Motor neuron (in vitro differentiated cells): ENCODE measurements at regions of chr6 and their contacts with region 1.

Region 1: DNA sequence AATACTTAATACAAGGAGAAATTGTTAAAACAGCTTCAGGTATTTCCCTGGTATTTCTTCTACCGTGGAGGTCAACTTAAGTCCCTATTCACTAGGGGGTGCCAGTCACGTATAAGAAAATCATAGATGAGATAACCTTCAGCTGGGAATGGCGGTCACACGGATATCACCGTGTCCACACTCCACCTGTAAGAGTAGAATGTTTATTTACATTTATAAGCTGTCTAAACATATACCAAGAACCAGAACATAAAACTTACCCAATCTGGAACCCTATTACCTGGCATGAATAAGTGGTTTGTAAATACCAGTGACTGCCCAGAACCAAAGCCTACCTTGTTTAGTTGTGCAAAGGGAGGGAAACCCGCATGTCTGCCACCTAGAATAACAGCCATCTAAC is 1.9 kb upstream of the ELOVL4 start:
- ATAC-seq: peak in 2 of 8 experiments; percentile 5 to 8
- H3K4me3 ChIP-seq: no peak overlapping the region
- H3K27ac ChIP-seq: no peak overlapping the region
- H3K4me1 ChIP-seq: peaks cover 2 to 18% of the 10 kb centered on the region in 2 donors

Region 2: DNA sequence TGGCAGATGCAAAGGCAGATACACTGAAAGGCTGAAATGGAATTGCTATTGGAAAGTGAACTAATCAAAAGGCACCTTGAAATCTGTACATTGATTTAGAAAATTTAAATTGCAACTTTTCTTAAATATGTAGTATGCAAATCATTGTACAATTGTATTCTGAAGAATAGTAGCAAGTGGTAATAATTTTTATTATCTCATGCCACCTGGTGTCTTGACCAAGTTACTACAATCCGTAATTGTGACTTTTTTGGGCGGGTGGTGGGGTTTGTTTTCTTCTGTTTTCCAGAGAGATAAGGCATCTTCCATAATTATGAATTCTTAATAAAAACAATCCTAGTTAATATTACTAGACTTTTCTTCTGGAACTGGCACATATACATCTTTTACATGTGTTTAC is 144.8 kb after region 1 on chr6:
- in situ Hi-C with region 1: loop called in 1 of 9 experiments (anchors 25 kb)
- ATAC-seq: peak in 1 of 8 experiments; percentile 37
- H3K4me3 ChIP-seq: no peak overlapping the region
- H3K27ac ChIP-seq: no peak overlapping the region
- H3K4me1 ChIP-seq: no peaks in the 10 kb centered on the region